ENCODE measurements at regions of chr12 and their contacts with region 1.

Region 1: GRCh38 chr12:7806863-7807487 is 17.8 kb downstream of the NANOG start:
- DNase-seq: peak; percentile 69 to 80 (median 72)
- ATAC-seq: peak; percentile 69
- H3K4me3 ChIP-seq: no peak overlapping the region
- H3K27ac ChIP-seq: no peak overlapping the region
- H3K4me1 ChIP-seq: no peaks in the 10 kb centered on the region
- H3K27me3 ChIP-seq: no peaks in the 10 kb centered on the region
- CTCF ChIP-seq: peak; percentile 52 to 84 (median 80)
- POLR2A ChIP-seq: no peak

Region 2: DNA sequence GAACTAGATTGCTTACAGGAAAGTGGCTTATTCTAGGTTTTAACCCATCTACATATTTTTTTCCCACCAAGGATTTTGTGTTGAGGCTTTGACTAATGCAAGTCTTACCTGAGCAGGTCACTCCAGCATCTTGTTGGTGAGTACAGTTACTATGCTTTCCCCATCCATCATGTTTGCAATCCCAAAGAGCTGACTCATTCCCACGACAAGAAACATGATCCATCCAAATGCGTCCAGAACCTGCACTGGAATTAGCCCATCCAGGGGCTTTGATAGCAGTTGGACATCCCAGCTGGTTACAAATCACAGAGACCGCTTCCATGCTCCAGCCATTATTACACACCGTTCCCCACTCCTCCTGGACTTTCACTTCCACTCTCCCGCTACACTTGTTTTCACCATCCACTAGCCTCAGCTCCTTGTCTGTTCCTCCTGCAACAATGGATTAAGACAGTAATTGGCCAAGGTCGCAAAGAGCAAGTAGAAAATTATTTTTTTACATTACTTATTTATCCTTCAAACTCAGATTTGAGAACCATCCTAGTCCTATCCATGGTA is 305.9 kb before region 1 on chr12:
- intact Hi-C with region 1: no loop called
- DNase-seq: peak in 1 of 4 donors; percentile 24
- ATAC-seq: no peak
- H3K4me3 ChIP-seq: no peak overlapping the region
- H3K27ac ChIP-seq: peak overlapping the region in 1 of 4 donors; percentile 40
- H3K4me1 ChIP-seq: no peaks in the 10 kb centered on the region
- H3K27me3 ChIP-seq: no peaks in the 10 kb centered on the region
- CTCF ChIP-seq: no peak
- POLR2A ChIP-seq: peak in 1 of 3 donors; percentile 39

Region 3: GRCh38 chr12:7678738-7679137 is 128.2 kb before region 1 on chr12:
- intact Hi-C with region 1: loop called (anchors 10 kb)
- DNase-seq: no peak
- ATAC-seq: no peak
- H3K4me3 ChIP-seq: no peak overlapping the region
- H3K27ac ChIP-seq: no peak overlapping the region
- H3K4me1 ChIP-seq: peaks cover 4% of the 10 kb centered on the region
- H3K27me3 ChIP-seq: no peaks in the 10 kb centered on the region
- CTCF ChIP-seq: no peak
- POLR2A ChIP-seq: no peak

Region 4: DNA sequence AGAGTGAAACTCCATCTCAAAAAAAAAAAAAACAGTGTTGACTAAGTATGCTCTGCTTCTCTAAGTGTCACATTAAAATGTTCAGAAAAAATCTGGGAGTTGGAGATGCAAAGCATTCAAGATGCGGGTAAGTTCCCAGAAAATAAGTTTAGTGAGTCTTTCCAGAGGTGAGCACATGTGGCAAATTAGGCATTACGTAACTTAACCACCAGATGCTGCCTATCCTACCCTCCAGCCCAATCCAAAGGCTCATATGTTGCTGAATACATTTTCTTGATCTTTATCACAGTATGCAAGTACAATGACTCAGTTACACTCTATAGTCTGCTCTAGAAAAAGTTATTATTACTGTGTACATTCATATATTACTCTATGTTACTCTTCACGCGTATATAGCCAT is 62.2 kb after region 1 on chr12:
- intact Hi-C with region 1: no loop called
- DNase-seq: no peak
- ATAC-seq: no peak
- H3K4me3 ChIP-seq: no peak overlapping the region
- H3K27ac ChIP-seq: no peak overlapping the region
- H3K4me1 ChIP-seq: peaks cover 5% of the 10 kb centered on the region
- H3K27me3 ChIP-seq: no peaks in the 10 kb centered on the region
- CTCF ChIP-seq: no peak
- POLR2A ChIP-seq: no peak

Region 5: GRCh38 chr12:8143261-8143660 is 336.3 kb after region 1 on chr12:
- intact Hi-C with region 1: no loop called
- DNase-seq: no peak
- ATAC-seq: no peak
- H3K4me3 ChIP-seq: no peak overlapping the region
- H3K27ac ChIP-seq: no peak overlapping the region
- H3K4me1 ChIP-seq: no peaks in the 10 kb centered on the region
- H3K27me3 ChIP-seq: no peaks in the 10 kb centered on the region
- CTCF ChIP-seq: no peak
- POLR2A ChIP-seq: no peak

Measured in body of pancreas (tissue), 4 donors.